ENCODE measurements at regions of chrX and their contacts with region 1.

Region 1: DNA sequence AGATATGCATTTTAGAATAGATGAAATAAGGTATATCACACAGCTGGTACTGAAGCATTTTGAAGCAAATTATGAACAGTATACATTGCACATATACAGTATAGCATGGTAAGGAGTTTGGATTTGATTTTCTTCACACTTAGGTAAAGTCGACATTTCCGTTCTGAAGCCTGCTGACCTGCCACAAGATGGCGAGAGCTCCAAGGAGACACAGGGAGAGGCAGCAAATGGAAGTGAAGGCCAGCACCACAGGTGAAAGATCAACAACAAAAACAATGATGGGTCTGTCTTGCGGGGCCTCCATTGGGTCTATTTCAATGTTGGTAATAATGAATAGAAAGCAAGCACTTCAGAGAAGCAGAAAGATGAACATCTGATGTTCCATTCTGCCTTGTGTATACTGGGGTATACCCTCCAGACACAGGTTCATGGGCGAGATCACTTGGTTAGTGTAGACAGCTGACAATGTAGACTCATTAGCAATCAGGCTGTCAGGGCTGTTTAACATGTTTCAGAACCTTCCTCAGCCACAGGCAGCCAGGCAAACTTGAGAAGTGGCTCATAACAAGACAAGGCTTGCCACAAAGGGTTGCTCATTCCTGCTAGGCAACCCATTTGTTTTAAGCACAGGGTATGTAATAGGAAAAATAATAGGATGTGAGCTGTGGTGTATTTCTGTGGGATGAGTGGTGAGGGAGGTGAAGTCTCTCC is 21.4 kb upstream of the NOX1 start:
- DNase-seq: peak; percentile 26
- H3K4me3 ChIP-seq: no peak overlapping the region
- H3K27ac ChIP-seq: no peak overlapping the region
- H3K4me1 ChIP-seq: no peaks in the 10 kb centered on the region
- H3K27me3 ChIP-seq: no peaks in the 10 kb centered on the region
- CTCF ChIP-seq: peak; percentile 42 to 50
- POLR2A ChIP-seq: no peak

Region 2: GRCh38 chrX:100829730-100830129 is 65.8 kb before region 1 on chrX:
- CTCF ChIA-PET with region 1: no interaction called
- POLR2A ChIA-PET with region 1: no interaction called
- dilution Hi-C with region 1: no loop called
- intact Hi-C with region 1: no loop called
- DNase-seq: peak; percentile 28
- H3K4me3 ChIP-seq: no peak overlapping the region
- H3K27ac ChIP-seq: peak overlapping the region; percentile 7
- H3K4me1 ChIP-seq: peaks cover 9% of the 10 kb centered on the region
- H3K27me3 ChIP-seq: no peaks in the 10 kb centered on the region
- CTCF ChIP-seq: no peak
- POLR2A ChIP-seq: no peak

Region 3: DNA sequence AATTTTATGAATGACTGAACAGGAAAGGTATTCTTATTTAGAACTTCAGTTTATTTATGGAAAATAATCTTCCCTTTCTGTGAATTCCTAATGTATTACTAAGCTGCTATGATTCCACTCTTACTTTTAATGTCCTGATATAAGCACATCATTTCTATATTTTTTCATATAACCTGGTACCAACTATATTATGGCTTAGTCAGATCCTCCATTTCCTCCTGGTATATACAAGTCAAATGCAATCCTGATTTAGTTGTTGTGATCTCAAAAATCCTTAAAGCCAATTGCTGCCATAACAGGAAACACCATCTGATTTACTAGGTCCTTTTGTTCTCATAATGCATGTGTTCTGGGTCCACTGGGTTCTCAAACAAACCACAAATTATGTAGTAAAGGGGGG is 129.6 kb after region 1 on chrX:
- CTCF ChIA-PET with region 1: no interaction called
- POLR2A ChIA-PET with region 1: no interaction called
- dilution Hi-C with region 1: no loop called
- intact Hi-C with region 1: loop called (anchors 10 kb)
- DNase-seq: peak; percentile 64
- H3K4me3 ChIP-seq: no peak overlapping the region
- H3K27ac ChIP-seq: peak overlapping the region; percentile 68
- H3K4me1 ChIP-seq: peaks cover 11% of the 10 kb centered on the region
- H3K27me3 ChIP-seq: no peaks in the 10 kb centered on the region
- CTCF ChIP-seq: no peak
- POLR2A ChIP-seq: no peak

Region 4: DNA sequence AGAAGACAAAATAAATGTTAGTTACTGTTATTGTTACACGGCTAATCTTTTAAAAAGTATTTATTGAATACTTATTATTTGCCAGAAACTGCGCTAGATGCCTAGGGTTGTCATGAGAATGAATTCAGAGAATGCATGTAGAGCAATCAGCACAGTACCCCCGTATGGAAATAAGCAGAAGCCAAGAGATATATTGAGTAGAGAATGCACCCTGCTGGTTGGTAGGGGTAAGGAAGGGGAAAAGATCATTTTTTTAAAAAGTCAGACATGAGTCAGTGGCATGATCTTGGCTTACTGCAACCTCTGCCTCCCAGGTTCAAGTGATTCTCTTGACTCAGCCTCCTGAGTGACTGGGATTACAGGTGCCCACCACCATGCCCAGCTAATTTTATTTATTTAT is 311.0 kb after region 1 on chrX:
- CTCF ChIA-PET with region 1: no interaction called
- POLR2A ChIA-PET with region 1: no interaction called
- dilution Hi-C with region 1: no loop called
- intact Hi-C with region 1: loop called (anchors 1 kb)
- DNase-seq: peak; percentile 52
- H3K4me3 ChIP-seq: no peak overlapping the region
- H3K27ac ChIP-seq: no peak overlapping the region
- H3K4me1 ChIP-seq: no peaks in the 10 kb centered on the region
- H3K27me3 ChIP-seq: no peaks in the 10 kb centered on the region
- CTCF ChIP-seq: peak; percentile 22 to 36
- POLR2A ChIP-seq: no peak

Region 5: DNA sequence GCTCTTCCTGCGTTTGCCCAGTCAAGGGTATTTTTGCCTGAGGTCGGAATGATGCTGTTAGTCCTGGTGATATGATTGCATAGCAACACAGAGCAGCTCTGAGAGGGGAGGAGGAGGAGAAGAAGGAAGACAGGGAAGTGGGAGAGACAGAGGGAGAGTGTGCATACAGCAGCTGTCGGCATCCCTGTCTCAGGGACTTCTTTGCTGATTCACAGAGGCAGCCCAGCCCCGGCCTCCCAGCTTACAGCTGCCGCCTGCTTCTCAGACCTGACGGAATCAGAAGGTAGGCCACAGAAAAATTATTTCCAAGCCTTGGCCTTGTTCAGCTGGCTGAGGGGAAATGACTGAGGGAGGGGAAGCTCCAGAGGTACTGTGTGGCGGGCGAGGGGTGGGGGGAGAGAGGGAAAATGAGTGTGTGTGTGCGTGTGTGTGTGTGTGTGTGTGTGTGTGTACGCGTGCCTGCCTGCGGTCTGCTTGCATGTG is 324.4 kb after region 1 on chrX:
- CTCF ChIA-PET with region 1: no interaction called
- POLR2A ChIA-PET with region 1: no interaction called
- dilution Hi-C with region 1: no loop called
- intact Hi-C with region 1: no loop called
- DNase-seq: no peak
- H3K4me3 ChIP-seq: no peak overlapping the region
- H3K27ac ChIP-seq: peak overlapping the region; percentile 11
- H3K4me1 ChIP-seq: peaks cover 22% of the 10 kb centered on the region
- H3K27me3 ChIP-seq: no peaks in the 10 kb centered on the region
- CTCF ChIP-seq: no peak
- POLR2A ChIP-seq: no peak

Measured in endothelial cell of umbilical vein (primary cell).